AG04450 (cell line): ENCODE measurements at regions of chr1 and their contacts with region 1.

Region 1: DNA sequence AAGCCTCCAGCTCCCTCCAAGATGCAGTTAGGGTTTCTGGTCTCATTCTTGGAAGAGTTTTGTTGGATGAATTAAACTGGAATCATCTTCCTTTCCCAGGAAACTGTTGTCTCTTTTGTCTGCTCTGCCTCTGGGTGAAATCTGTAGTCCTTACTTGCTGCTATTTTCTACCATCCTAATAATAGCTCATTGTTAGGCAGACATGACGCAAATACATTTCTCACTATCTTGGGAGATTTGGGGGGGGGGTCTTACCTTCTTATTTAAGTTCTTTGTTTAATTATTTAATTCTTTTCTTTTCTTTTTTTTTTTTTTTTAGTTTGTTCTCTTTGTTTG is 85.4 kb upstream of the DUSP10 start:
- DNase-seq: no peak
- H3K4me3 ChIP-seq: no peak overlapping the region
- H3K27ac ChIP-seq: no peak overlapping the region
- H3K27me3 ChIP-seq: no peaks in the 10 kb centered on the region
- CTCF ChIP-seq: no peak

Region 2: GRCh38 chr1:221801773-221802516 is 25.3 kb before region 1 on chr1:
- CTCF ChIA-PET with region 1: no interaction called
- POLR2A ChIA-PET with region 1: interaction called, 12 read pairs
- DNase-seq: peak; percentile 30
- H3K4me3 ChIP-seq: no peak overlapping the region
- H3K27ac ChIP-seq: peak overlapping the region; percentile 2
- H3K27me3 ChIP-seq: no peaks in the 10 kb centered on the region
- CTCF ChIP-seq: no peak

Region 3: DNA sequence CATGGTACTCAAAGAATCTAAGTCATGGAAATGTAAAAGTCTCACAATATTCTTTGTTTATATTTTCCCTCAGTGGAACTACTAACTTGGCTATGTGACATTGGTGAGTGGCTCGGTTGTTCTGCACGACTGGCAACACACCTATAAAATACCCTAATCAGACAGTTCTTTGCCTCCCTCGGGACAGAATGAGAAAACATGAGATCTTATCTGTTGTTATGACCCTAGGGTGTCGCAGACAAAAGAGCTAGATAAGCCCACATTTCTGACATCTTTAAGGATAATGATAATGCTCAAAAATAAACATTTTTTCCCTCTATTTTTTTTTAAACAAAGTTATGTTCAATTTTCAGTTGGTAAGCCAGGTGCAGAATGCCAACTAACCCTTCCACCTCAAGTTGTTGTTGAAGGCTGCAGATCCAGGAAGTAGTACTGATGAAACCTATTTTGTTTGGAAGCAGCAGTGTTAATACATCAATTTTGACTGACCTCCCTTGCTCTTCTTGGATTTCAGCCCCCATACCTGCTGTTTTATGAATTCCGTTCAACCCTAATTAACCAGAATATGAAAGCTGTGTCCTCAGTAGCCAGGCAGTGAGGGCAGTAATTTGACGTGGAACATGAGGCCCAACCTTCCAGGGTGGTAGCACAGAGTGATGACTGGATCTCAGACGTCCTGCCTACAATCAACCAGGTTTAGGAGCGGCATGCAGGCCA is 23.4 kb after region 1 on chr1:
- CTCF ChIA-PET with region 1: no interaction called
- POLR2A ChIA-PET with region 1: no interaction called
- DNase-seq: no peak
- H3K4me3 ChIP-seq: no peak overlapping the region
- H3K27ac ChIP-seq: no peak overlapping the region
- H3K27me3 ChIP-seq: no peaks in the 10 kb centered on the region
- CTCF ChIP-seq: no peak